PC-9 (cell line): ENCODE measurements at regions of chr1 and their contacts with region 1.

Region 1: GRCh38 chr1:55589676-55590297 is 374.6 kb upstream of the USP24 start:
- DNase-seq: no peak
- H3K4me3 ChIP-seq: no peak overlapping the region
- H3K27ac ChIP-seq: no peak overlapping the region
- H3K4me1 ChIP-seq: peaks cover 6% of the 10 kb centered on the region
- H3K27me3 ChIP-seq: no peaks in the 10 kb centered on the region
- CTCF ChIP-seq: no peak

Region 2: GRCh38 chr1:55542901-55543504 is 46.8 kb before region 1 on chr1:
- CTCF ChIA-PET with region 1: no interaction called
- POLR2A ChIA-PET with region 1: no interaction called
- intact Hi-C with region 1: no loop called
- DNase-seq: peak in 1 of 2 experiments; percentile 67
- H3K4me3 ChIP-seq: no peak overlapping the region
- H3K27ac ChIP-seq: 0 out of 2 replicates have a peak overlapping the region, but pooled peaks have one; percentile 15
- H3K4me1 ChIP-seq: peaks cover 18% of the 10 kb centered on the region
- H3K27me3 ChIP-seq: no peaks in the 10 kb centered on the region
- CTCF ChIP-seq: no peak

Region 3: GRCh38 chr1:56120021-56120420 is 530.2 kb after region 1 on chr1:
- CTCF ChIA-PET with region 1: no interaction called
- POLR2A ChIA-PET with region 1: interaction called, 12 read pairs
- intact Hi-C with region 1: no loop called
- DNase-seq: no peak
- H3K4me3 ChIP-seq: no peak overlapping the region
- H3K27ac ChIP-seq: no peak overlapping the region
- H3K4me1 ChIP-seq: peaks cover 4% of the 10 kb centered on the region
- H3K27me3 ChIP-seq: no peaks in the 10 kb centered on the region
- CTCF ChIP-seq: no peak